CD4-positive, alpha-beta T cell (primary cell): ENCODE measurements at regions of chr16 and their contacts with region 1.

Region 1: GRCh38 chr16:21300309-21301167 is 22.4 kb upstream of the CRYM start:
- DNase-seq: peak in 9 of 14 experiments; percentile 7 to 78 (median 15)
- ATAC-seq: peak; percentile 67
- H3K4me3 ChIP-seq: peak overlapping the region; percentile 62
- H3K4me3 Mint-ChIP-seq: peak overlapping the region; percentile 94
- H3K27ac ChIP-seq: no peak overlapping the region
- H3K27ac Mint-ChIP-seq: no peak overlapping the region
- H3K4me1 ChIP-seq: peaks cover 21% of the 10 kb centered on the region
- H3K4me1 Mint-ChIP-seq: peaks cover 30% of the 10 kb centered on the region
- H3K27me3 ChIP-seq: peaks cover 0 to 3% of the 10 kb centered on the region in 2 experiments
- H3K27me3 Mint-ChIP-seq: peaks cover 36% of the 10 kb centered on the region
- CTCF ChIP-seq: no peak

Region 2: DNA sequence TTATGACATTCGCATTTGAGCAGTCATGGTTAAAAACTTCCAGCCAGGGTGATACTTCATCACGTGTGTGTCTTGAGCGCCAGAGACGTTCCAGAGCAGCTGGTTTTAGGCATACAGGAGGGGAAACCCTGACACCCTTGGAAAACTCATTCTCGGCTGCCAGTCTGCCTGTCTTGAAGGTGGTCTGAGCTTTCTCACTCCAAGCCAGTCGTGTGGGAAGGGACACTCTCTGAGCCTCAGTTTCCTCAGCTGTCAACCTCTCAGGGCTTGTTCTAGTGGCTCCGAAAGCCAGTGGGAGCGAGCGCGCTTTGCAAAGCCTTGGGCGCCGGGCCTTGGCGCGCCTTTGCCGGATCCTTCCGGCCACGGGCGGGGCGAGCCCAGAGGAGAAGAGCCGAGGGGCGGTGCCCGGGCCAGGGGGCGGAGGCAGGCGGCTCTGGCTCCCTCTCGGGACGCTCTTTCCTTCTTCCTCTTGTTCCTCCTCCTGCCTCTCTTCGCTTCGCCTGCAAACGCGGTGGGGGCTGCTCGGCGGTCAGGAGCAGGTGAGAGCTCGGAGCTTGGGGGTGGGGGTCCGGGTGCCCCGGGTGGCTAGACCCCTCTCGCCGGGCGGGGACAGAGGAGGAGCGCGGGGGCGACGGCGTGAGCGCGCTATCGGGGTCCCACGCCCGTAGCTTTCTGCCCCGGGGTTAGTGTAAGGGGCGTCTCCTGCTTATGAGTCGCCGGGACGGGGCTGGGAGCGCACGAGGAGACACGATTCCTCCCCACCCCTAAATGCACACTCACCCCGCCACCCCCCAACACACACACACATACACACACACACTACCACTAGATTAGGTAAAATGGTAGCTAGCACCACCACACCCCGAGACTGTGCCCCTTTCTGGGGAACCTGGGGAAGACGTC is 142.1 kb before region 1 on chr16 and contains the start of gene LDAF1:
- CTCF ChIA-PET with region 1: no interaction called
- POLR2A ChIA-PET with region 1: no interaction called
- intact Hi-C with region 1: loop called in 1 of 2 experiments (anchors 10 kb)
- DNase-seq: peak; percentile 56 to 86 (median 76)
- ATAC-seq: peak; percentile 96
- H3K4me3 ChIP-seq: peak within 1 kb of the TSS; percentile 77
- H3K4me3 Mint-ChIP-seq: peak within 1 kb of the TSS; percentile 92
- H3K27ac ChIP-seq: peak within 1 kb of the TSS in 1 of 2 donors; percentile 14
- H3K27ac Mint-ChIP-seq: peak within 1 kb of the TSS; percentile 41
- H3K4me1 ChIP-seq: peaks cover 22% of the 10 kb centered on the region
- H3K4me1 Mint-ChIP-seq: peaks cover 26% of the 10 kb centered on the region
- H3K27me3 ChIP-seq: no peaks in the 10 kb centered on the region
- H3K27me3 Mint-ChIP-seq: no peaks in the 10 kb centered on the region
- CTCF ChIP-seq: no peak
- total RNA-seq, gene LDAF1: 11.0 to 11.2 TPM